CD14-positive monocyte (primary cell): ENCODE measurements at regions of chr7 and their contacts with region 1.

Region 1: DNA sequence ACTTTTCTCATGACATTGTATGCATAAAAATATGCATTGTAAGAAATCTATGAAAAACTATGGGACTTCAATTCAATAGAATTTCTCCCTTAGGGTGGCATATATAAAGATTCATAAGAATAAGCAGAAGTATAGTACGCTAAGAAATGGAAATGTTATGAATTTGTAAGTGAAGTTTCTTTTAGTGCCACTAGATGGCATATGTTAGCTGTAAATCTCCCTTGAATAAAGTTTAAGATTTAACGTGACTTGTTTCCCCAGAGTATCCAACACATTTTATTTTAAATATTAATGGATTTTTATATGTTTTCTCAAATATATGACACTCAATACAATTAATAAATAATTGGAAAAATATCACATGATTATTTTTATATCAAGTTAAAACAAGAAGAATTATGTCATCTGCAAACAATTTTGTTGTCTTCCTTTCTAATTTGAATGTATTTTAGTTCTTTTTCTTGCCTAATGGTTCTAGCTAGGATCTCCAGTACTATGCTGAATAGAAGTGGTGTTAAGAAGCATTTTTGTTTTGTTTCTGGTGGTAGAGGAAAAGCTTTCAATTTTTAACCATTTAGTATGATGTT is 287.2 kb downstream of the HGF start:
- DNase-seq: peak; percentile 23 to 60 (median 32)
- H3K4me3 ChIP-seq: no peak overlapping the region
- H3K4me3 Mint-ChIP-seq: no peak overlapping the region
- H3K27ac ChIP-seq: no peak overlapping the region
- H3K27ac Mint-ChIP-seq: peak overlapping the region in 1 of 7 donors; percentile 40
- H3K4me1 ChIP-seq: peaks cover 4 to 6% of the 10 kb centered on the region in 2 donors
- H3K4me1 Mint-ChIP-seq: peaks cover 12% of the 10 kb centered on the region
- H3K27me3 ChIP-seq: no peaks in the 10 kb centered on the region
- H3K27me3 Mint-ChIP-seq: peaks cover 0 to 5% (median 0%) of the 10 kb centered on the region in 3 donors
- CTCF ChIP-seq: peak; percentile 80

Region 2: DNA sequence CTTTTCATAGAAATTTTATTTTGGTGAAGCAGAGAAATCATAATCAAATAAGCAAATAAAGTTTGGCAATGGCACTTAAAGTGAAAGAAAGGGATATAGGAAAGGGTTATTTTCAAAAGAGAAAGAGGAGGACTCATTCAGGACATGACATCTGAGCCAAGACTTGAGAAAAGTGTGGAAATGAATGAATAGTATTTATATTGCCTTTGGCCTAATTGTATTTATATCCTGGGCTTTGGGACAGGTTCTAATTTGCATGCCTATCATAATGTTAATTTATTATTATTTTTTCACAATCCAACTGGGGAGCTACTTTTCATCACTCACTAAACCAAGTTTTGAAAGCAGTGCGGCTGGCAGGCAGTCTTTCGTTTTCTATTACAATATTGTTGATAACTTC is 89.7 kb before region 1 on chr7:
- intact Hi-C with region 1: no loop called
- DNase-seq: no peak
- H3K4me3 ChIP-seq: no peak overlapping the region
- H3K4me3 Mint-ChIP-seq: no peak overlapping the region
- H3K27ac ChIP-seq: no peak overlapping the region
- H3K27ac Mint-ChIP-seq: no peak overlapping the region
- H3K4me1 ChIP-seq: no peaks in the 10 kb centered on the region
- H3K4me1 Mint-ChIP-seq: no peaks in the 10 kb centered on the region
- H3K27me3 ChIP-seq: no peaks in the 10 kb centered on the region
- H3K27me3 Mint-ChIP-seq: peaks cover 0 to 2% (median 1%) of the 10 kb centered on the region in 3 donors
- CTCF ChIP-seq: no peak

Region 3: GRCh38 chr7:82017334-82017943 is 534.7 kb after region 1 on chr7:
- intact Hi-C with region 1: loop called in 1 of 2 experiments (anchors 5 kb)
- DNase-seq: peak; percentile 1 to 11 (median 4)
- H3K4me3 ChIP-seq: no peak overlapping the region
- H3K4me3 Mint-ChIP-seq: no peak overlapping the region
- H3K27ac ChIP-seq: no peak overlapping the region
- H3K27ac Mint-ChIP-seq: no peak overlapping the region
- H3K4me1 ChIP-seq: no peaks in the 10 kb centered on the region
- H3K4me1 Mint-ChIP-seq: no peaks in the 10 kb centered on the region
- H3K27me3 ChIP-seq: no peaks in the 10 kb centered on the region
- H3K27me3 Mint-ChIP-seq: peaks cover 0 to 1% (median 0%) of the 10 kb centered on the region in 3 donors
- CTCF ChIP-seq: peak; percentile 64